ENCODE measurements at regions of chr17 and their contacts with region 1.

Region 1: GRCh38 chr17:78865682-78866390 is 25.2 kb upstream of the USP36 start:
- DNase-seq: peak; percentile 82 to 86
- H3K4me3 ChIP-seq: no peak overlapping the region
- H3K27ac ChIP-seq: peak overlapping the region; percentile 54 to 92
- H3K4me1 ChIP-seq: no peaks in the 10 kb centered on the region
- H3K27me3 ChIP-seq: no peaks in the 10 kb centered on the region
- CTCF ChIP-seq: peak; percentile 91 to 93 (median 93)
- POLR2A ChIP-seq: no peak

Region 2: DNA sequence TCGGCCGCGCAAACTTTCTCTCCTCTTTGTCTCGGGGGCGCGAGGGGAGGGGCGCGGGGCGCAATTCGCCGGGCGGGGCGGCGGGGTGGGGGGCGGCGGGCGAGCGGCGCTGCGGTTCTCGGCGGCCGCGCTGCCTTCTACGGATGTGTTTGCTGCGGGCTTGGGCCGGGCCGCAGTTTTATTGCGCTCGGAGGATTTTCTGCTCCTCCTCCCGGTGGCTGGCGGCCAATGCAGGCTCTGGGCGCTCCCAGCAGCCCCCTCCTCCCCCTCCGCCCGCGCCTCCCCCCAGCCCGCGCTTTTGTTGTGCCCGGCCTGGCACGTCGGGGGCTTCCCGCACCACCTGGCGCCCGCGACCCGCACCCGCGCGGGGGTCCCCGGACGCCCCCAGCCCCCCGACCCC is 59.4 kb after region 1 on chr17 and contains the start of gene TIMP2:
- intact Hi-C with region 1: loop called (anchors 10 kb)
- DNase-seq: peak; percentile 93 to 95
- H3K4me3 ChIP-seq: peak within 1 kb of the TSS; percentile 63
- H3K27ac ChIP-seq: peak within 1 kb of the TSS; percentile 98 to 99
- H3K4me1 ChIP-seq: peaks cover 0 to 16% of the 10 kb centered on the region in 2 donors
- H3K27me3 ChIP-seq: no peaks in the 10 kb centered on the region
- CTCF ChIP-seq: peak in 1 of 4 experiments; percentile 28
- POLR2A ChIP-seq: peak; percentile 53 to 70
- total RNA-seq, gene TIMP2: 119 to 399 (median 127) TPM

Region 3: GRCh38 chr17:78970834-78971773 is 105.3 kb after region 1 on chr17:
- intact Hi-C with region 1: loop called (anchors 2 kb)
- DNase-seq: peak; percentile 82 to 88
- H3K4me3 ChIP-seq: no peak overlapping the region
- H3K27ac ChIP-seq: peak overlapping the region; percentile 60 to 61
- H3K4me1 ChIP-seq: peaks cover 0 to 4% of the 10 kb centered on the region in 2 donors
- H3K27me3 ChIP-seq: no peaks in the 10 kb centered on the region
- CTCF ChIP-seq: peak; percentile 86 to 94 (median 89)
- POLR2A ChIP-seq: no peak